Pancreas (tissue), 10 donors: ENCODE measurements at regions of chr6 and their contacts with region 1.

Region 1: GRCh38 chr6:108492131-108492766 is 68.5 kb upstream of the FOXO3 start:
- DNase-seq: no peak
- ATAC-seq: peak; percentile 35 to 89 (median 76)
- H3K4me3 ChIP-seq: no peak overlapping the region
- H3K27ac ChIP-seq: no peak overlapping the region
- H3K4me1 ChIP-seq: peaks cover 5 to 8% (median 6%) of the 10 kb centered on the region in 3 donors
- H3K27me3 ChIP-seq: no peaks in the 10 kb centered on the region
- CTCF ChIP-seq: peak in 3 of 4 donors; percentile 6 to 28 (median 27)

Region 2: GRCh38 chr6:108113557-108114519 is 378.4 kb before region 1 on chr6:
- intact Hi-C with region 1: loop called in 1 of 3 experiments (anchors 10 kb)
- DNase-seq: peak in 5 of 6 donors; percentile 30 to 69 (median 47)
- ATAC-seq: peak; percentile 36 to 61 (median 52)
- H3K4me3 ChIP-seq: peak overlapping the region in 1 of 4 donors; percentile 45
- H3K27ac ChIP-seq: no peak overlapping the region
- H3K4me1 ChIP-seq: peaks cover 0 to 22% (median 0%) of the 10 kb centered on the region in 3 donors
- H3K27me3 ChIP-seq: peaks cover 0 to 9% (median 4%) of the 10 kb centered on the region in 4 donors
- CTCF ChIP-seq: peak in 3 of 4 donors; percentile 26 to 40 (median 40)